PC-9 (cell line): ENCODE measurements at regions of chr3 and their contacts with region 1.

Region 1: DNA sequence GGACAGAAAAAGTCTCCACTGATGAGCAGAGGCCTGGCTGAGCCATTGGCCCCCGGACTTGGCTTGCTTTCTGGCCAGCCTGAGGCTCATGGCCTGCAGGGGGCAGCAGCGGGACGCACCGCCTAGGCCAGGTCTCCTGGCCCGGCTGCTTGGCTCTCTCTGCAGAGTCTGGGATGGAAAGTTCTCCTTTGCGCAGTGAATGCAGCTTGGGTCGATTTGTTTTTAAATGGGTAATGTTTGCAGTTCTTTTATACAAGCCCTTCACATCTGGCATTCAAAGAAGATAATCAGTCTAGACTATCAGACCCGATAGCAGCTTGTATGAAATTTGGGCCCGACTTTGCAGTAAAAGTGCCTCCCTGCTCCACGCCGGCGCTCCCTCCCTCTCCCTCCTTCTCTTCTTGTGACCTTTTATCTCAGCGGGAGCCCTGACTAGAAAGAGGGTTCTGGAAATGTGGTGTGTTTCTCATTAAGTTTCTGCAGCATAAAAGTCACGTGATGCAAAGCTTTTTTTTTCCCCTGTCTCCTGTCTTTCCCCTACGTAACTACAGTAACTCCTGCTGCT is 59.9 kb downstream of the ZNF621 start:
- DNase-seq: peak in 1 of 2 experiments; percentile 71
- H3K4me3 ChIP-seq: no peak overlapping the region
- H3K27ac ChIP-seq: no peak overlapping the region
- H3K4me1 ChIP-seq: no peaks in the 10 kb centered on the region
- H3K27me3 ChIP-seq: no peaks in the 10 kb centered on the region
- CTCF ChIP-seq: peak; percentile 90

Region 2: DNA sequence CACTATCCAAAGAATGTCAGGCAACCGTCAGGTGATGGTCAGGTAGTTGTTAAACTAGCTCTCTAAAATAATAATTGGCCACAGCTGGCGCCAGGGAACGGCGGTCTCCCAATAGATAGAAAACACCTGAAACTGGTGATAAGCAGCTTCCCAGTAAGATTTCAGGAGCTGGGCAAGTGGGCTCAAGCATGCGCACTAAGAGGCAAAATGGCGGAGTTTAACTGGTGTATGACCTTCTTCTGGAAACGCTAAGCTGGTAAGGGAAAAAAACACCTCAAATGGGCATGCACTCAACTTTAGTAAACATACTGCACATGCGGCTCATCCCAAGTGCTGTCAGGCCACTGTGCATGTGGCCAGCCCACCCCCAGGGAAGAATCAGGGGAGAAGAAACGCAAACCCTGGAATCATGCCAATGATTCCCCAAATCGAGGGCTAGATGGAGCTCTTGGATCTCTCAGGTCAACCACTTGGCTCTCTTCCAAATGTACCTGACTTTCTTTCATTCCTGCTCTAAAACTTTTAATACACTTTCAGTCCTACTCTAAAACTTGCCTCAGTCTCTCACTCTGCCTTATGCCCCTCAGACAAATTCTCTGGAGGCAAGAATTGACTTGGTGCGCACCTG is 135.1 kb after region 1 on chr3:
- CTCF ChIA-PET with region 1: no interaction called
- POLR2A ChIA-PET with region 1: no interaction called
- intact Hi-C with region 1: loop called (anchors 10 kb)
- DNase-seq: peak in 1 of 2 experiments; percentile 17
- H3K4me3 ChIP-seq: no peak overlapping the region
- H3K27ac ChIP-seq: no peak overlapping the region
- H3K4me1 ChIP-seq: no peaks in the 10 kb centered on the region; the same call in 1 of the 2 replicates
- H3K27me3 ChIP-seq: no peaks in the 10 kb centered on the region
- CTCF ChIP-seq: peak; percentile 46; the same call in 1 of the 2 replicates

Region 3: GRCh38 chr3:40971191-40972168 is 386.8 kb after region 1 on chr3:
- CTCF ChIA-PET with region 1: no interaction called
- POLR2A ChIA-PET with region 1: no interaction called
- intact Hi-C with region 1: loop called (anchors 1 kb)
- DNase-seq: peak; percentile 75 to 98
- H3K4me3 ChIP-seq: no peak overlapping the region; the same call in 1 of the 2 replicates
- H3K27ac ChIP-seq: peak overlapping the region; percentile 92
- H3K4me1 ChIP-seq: peaks cover 32% of the 10 kb centered on the region
- H3K27me3 ChIP-seq: no peaks in the 10 kb centered on the region
- CTCF ChIP-seq: no peak; the same call in 1 of the 2 replicates

Region 4: GRCh38 chr3:41716471-41716870 is 1131.8 kb after region 1 on chr3:
- CTCF ChIA-PET with region 1: no interaction called
- POLR2A ChIA-PET with region 1: no interaction called
- intact Hi-C with region 1: loop called (anchors 1 kb)
- DNase-seq: no peak
- H3K4me3 ChIP-seq: no peak overlapping the region
- H3K27ac ChIP-seq: no peak overlapping the region
- H3K4me1 ChIP-seq: peaks cover 3% of the 10 kb centered on the region
- H3K27me3 ChIP-seq: no peaks in the 10 kb centered on the region
- CTCF ChIP-seq: peak; percentile 47

Region 5: GRCh38 chr3:42090973-42091731 is 1506.4 kb after region 1 on chr3 and contains the start of gene TRAK1:
- CTCF ChIA-PET with region 1: no interaction called
- POLR2A ChIA-PET with region 1: no interaction called
- intact Hi-C with region 1: loop called (anchors 10 kb)
- DNase-seq: no peak
- H3K4me3 ChIP-seq: no peak within 1 kb of the TSS
- H3K27ac ChIP-seq: no peak within 1 kb of the TSS
- H3K4me1 ChIP-seq: no peaks in the 10 kb centered on the region; the same call in 1 of the 2 replicates
- H3K27me3 ChIP-seq: no peaks in the 10 kb centered on the region
- CTCF ChIP-seq: no peak
- total RNA-seq, gene TRAK1: 43.4 and 46.8 TPM in 2 replicates